Transverse colon (tissue), 4 donors: ENCODE measurements at regions of chr12 and their contacts with region 1.

Region 1: DNA sequence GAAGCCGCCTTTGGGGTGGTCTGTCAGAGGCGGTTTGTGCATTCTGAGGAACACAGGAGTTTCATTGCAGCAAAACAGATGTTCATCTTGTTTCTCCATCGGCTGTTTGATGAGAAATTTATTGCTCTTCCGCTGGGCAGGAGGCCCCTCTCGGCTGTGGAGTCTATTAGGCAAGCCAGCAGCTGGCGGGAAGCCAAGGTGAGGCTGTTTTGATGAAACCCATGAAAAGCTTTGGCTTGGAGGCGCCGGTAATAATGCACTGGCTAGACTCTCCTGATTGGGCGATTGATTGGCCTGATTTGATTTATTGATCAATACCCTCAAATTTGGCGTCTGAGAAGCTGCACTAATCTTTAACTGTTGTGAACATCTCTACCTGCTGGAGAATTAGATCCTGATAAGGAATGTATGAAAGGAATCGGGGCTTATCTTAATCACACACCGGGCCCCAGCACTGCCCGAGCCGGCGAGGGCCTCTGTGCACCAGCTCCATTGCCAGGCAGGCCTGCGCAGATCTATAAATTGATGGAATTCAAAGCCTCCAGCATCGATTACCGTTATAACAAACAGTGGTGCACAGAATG is 187.7 kb downstream of the PHETA1 start:
- DNase-seq: peak; percentile 43
- H3K4me3 ChIP-seq: no peak overlapping the region
- H3K27ac ChIP-seq: no peak overlapping the region
- H3K4me1 ChIP-seq: peaks cover 0 to 17% (median 2%) of the 10 kb centered on the region in 4 donors
- H3K27me3 ChIP-seq: peaks cover 24% of the 10 kb centered on the region
- CTCF ChIP-seq: no peak
- EP300 ChIP-seq: no peak
- POLR2A ChIP-seq: no peak

Region 2: GRCh38 chr12:110015132-110015531 is 1166.1 kb before region 1 on chr12:
- in situ Hi-C with region 1: no loop called
- intact Hi-C with region 1: loop called (anchors 5 kb)
- DNase-seq: no peak
- H3K4me3 ChIP-seq: no peak overlapping the region
- H3K27ac ChIP-seq: no peak overlapping the region
- H3K4me1 ChIP-seq: peaks cover 0 to 16% (median 0%) of the 10 kb centered on the region in 4 donors
- H3K27me3 ChIP-seq: no peaks in the 10 kb centered on the region
- CTCF ChIP-seq: no peak
- EP300 ChIP-seq: no peak
- POLR2A ChIP-seq: no peak

Region 3: DNA sequence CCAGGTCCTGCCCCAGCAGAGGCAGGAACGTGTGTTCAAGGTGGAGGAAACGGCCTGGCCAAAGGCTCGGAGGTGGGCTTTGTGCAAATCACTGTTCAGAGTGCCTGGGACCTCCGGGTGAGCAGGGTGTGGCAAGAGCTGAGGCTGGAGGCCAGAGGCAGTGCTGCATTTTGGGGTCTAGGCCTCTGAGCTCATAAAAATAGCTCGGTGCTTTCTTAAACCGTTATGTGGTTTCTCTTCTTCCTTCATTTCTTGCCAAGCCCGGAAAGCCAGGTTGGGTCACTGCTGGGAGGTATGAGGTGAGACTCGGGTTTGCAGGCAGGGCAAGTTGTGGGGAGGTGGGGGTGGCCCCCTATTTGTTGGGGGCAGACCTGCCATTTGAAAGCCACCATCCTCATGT is 82.0 kb before region 1 on chr12:
- in situ Hi-C with region 1: no loop called
- intact Hi-C with region 1: loop called (anchors 5 kb)
- DNase-seq: no peak
- H3K4me3 ChIP-seq: no peak overlapping the region
- H3K27ac ChIP-seq: no peak overlapping the region
- H3K4me1 ChIP-seq: no peaks in the 10 kb centered on the region
- H3K27me3 ChIP-seq: peaks cover 13% of the 10 kb centered on the region
- CTCF ChIP-seq: no peak
- EP300 ChIP-seq: no peak
- POLR2A ChIP-seq: no peak

Region 4: GRCh38 chr12:111111681-111112080 is 69.6 kb before region 1 on chr12:
- in situ Hi-C with region 1: no loop called
- intact Hi-C with region 1: no loop called
- DNase-seq: no peak
- H3K4me3 ChIP-seq: no peak overlapping the region
- H3K27ac ChIP-seq: no peak overlapping the region
- H3K4me1 ChIP-seq: no peaks in the 10 kb centered on the region
- H3K27me3 ChIP-seq: no peaks in the 10 kb centered on the region
- CTCF ChIP-seq: no peak
- EP300 ChIP-seq: no peak
- POLR2A ChIP-seq: no peak